Vagina (tissue), 2 donors: ENCODE measurements at regions of chr5 and their contacts with region 1.

Region 1: DNA sequence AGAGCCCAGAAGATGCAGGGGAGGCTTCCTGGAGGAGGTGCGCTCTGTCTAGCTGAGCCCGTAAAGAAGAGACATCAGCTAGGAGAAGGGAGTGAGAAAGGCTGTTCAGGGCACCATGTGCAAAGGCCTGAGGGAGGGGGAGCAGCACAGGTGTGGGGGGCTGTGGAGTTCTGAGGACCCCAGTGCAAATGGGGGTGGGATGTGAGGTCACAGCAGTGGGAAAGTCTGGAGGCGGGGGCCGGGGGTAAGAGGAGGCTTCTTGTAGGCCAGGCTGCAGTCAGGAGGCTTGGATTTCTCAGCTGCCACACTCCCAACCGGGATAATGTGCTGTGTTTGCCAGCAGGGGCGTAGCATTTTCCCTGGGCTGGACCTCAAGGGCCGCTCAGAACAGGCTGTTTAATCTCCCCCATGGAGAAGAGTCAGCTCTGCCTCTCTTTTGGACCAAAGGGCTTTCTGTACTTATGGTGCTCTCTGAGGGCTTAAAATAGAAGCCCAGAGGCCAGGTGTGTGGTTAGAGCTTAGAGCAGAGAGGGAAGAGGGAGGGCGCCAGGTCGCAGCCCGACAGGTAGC is 5.7 kb downstream of the NEURL1B start:
- DNase-seq: no peak
- H3K4me3 ChIP-seq: peak overlapping the region in 1 of 2 donors; percentile 15
- H3K27ac ChIP-seq: peak overlapping the region; percentile 88
- H3K4me1 ChIP-seq: peaks cover 33% of the 10 kb centered on the region
- H3K27me3 ChIP-seq: no peaks in the 10 kb centered on the region
- CTCF ChIP-seq: peak in 1 of 3 experiments; percentile 11
- POLR2A ChIP-seq: no peak

Region 2: DNA sequence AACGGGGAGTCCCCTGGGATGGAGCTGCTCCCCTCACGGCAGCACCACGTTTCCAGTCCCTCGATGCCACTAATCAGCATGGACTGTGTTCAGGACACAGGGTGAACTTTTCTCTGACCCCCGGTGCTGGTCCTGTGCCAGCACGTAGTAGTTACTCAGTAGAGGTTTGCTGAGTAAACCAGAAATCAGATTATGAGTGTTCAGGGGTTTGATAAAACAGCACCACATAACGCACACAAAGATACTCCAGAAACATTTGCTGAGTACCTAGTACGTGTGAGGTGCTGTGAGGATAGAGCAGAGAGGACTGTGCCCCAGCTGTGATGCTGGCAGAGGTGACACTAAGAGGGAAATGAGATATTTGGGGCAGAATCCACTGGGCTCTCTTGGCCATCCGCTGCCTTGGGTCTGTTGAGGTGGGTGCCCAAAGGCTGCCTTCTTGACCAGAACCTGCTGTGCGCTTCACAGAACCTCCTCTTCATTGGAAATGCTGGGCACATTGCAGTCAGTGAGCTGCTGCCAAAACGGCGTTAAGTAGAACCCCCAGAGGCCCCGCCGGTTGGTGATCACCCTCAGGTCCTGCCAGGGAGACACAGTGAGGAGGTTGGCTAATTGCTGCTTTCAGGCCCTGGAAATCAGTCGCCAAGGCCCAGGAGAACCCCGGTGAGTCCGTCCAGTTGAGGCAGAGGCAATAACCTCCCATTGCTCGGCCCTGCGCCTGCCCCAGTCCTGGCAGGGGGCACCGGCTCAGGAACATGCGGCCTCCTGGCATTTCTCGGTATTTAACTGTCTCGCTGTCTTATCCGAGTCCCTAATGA is 43.7 kb after region 1 on chr5:
- intact Hi-C with region 1: loop called (anchors 5 kb)
- DNase-seq: no peak
- H3K4me3 ChIP-seq: no peak overlapping the region
- H3K27ac ChIP-seq: peak overlapping the region; percentile 47
- H3K4me1 ChIP-seq: peaks cover 45% of the 10 kb centered on the region
- H3K27me3 ChIP-seq: no peaks in the 10 kb centered on the region
- CTCF ChIP-seq: no peak
- POLR2A ChIP-seq: no peak